CD4-positive, alpha-beta T cell (primary cell): ENCODE measurements at regions of chr21 and their contacts with region 1.

Region 1: GRCh38 chr21:44018812-44019567 is 6.9 kb downstream of the TRAPPC10 start:
- DNase-seq: peak in 2 of 14 experiments; percentile 27 to 30
- ATAC-seq: no peak
- H3K4me3 ChIP-seq: no peak overlapping the region
- H3K4me3 Mint-ChIP-seq: peak overlapping the region; percentile 57
- H3K27ac ChIP-seq: peak overlapping the region in 1 of 2 donors; percentile 5
- H3K27ac Mint-ChIP-seq: peak overlapping the region; percentile 81
- H3K4me1 ChIP-seq: peaks cover 82% of the 10 kb centered on the region
- H3K4me1 Mint-ChIP-seq: peaks cover 87% of the 10 kb centered on the region
- H3K27me3 ChIP-seq: no peaks in the 10 kb centered on the region
- H3K27me3 Mint-ChIP-seq: no peaks in the 10 kb centered on the region
- CTCF ChIP-seq: no peak

Region 2: GRCh38 chr21:44074311-44074958 is 55.4 kb after region 1 on chr21:
- CTCF ChIA-PET with region 1: no interaction called
- POLR2A ChIA-PET with region 1: interaction called, 3 read pairs
- intact Hi-C with region 1: loop called in 1 of 2 experiments (anchors 2 kb)
- DNase-seq: peak in 3 of 14 experiments; percentile 31 to 56 (median 43)
- ATAC-seq: peak; percentile 51
- H3K4me3 ChIP-seq: no peak overlapping the region
- H3K4me3 Mint-ChIP-seq: no peak overlapping the region
- H3K27ac ChIP-seq: no peak overlapping the region
- H3K27ac Mint-ChIP-seq: peak overlapping the region; percentile 49
- H3K4me1 ChIP-seq: peaks cover 13% of the 10 kb centered on the region
- H3K4me1 Mint-ChIP-seq: peaks cover 27% of the 10 kb centered on the region
- H3K27me3 ChIP-seq: no peaks in the 10 kb centered on the region
- H3K27me3 Mint-ChIP-seq: no peaks in the 10 kb centered on the region
- CTCF ChIP-seq: no peak

Region 3: GRCh38 chr21:44083631-44084291 is 64.8 kb after region 1 on chr21:
- CTCF ChIA-PET with region 1: interaction called, 8 read pairs
- POLR2A ChIA-PET with region 1: interaction called, 42 read pairs
- intact Hi-C with region 1: loop called in 1 of 2 experiments (anchors 2 kb)
- DNase-seq: peak; percentile 44 to 90 (median 66)
- ATAC-seq: peak; percentile 81
- H3K4me3 ChIP-seq: peak overlapping the region; percentile 41
- H3K4me3 Mint-ChIP-seq: peak overlapping the region; percentile 69
- H3K27ac ChIP-seq: peak overlapping the region; percentile 80 to 91
- H3K27ac Mint-ChIP-seq: peak overlapping the region; percentile 95
- H3K4me1 ChIP-seq: peaks cover 96% of the 10 kb centered on the region
- H3K4me1 Mint-ChIP-seq: peaks cover 85% of the 10 kb centered on the region
- H3K27me3 ChIP-seq: no peaks in the 10 kb centered on the region
- H3K27me3 Mint-ChIP-seq: no peaks in the 10 kb centered on the region
- CTCF ChIP-seq: no peak